ENCODE measurements at regions of chr14 and their contacts with region 1.

Region 1: GRCh38 chr14:54691525-54692283 is 124.8 kb downstream of the SAMD4A start:
- DNase-seq: peak; percentile 82
- ATAC-seq: peak; percentile 86

Region 2: GRCh38 chr14:54727929-54728328 is 36.2 kb after region 1 on chr14:
- intact Hi-C with region 1: loop called (anchors 5 kb)
- DNase-seq: no peak
- ATAC-seq: no peak